ENCODE measurements at regions of chr14 and their contacts with region 1.

Region 1: DNA sequence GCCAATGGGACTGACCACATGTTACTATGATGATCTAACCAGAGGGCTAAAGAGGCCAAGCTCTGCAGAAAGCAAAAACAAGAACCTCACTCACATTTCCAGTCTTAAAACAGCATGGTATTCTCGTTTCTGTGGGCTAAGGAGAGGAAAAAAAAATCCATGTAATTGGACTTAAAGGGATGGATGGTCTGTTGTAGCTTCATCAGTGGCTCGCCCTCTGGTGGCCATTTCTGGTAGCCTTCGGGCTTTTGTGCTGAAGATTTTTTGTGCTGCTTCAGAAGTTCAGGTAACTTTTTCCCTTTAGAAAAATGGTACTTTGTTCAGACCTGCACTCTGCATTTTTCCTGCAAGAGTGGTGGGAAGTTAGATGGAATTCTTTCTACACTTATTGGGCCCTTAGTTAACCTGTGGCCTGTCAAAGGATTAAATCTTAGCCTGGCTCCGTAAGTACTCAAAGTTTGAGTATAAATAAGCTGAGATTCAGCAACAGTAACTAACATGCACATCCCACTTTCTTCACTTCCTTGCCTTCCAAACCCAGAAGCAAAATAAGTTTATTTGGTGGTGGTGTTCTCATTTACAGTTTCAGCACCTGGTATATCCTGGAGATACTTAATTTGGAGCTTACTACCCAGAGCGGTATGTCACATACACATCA is 22.3 kb downstream of the DCAF4 start:
- DNase-seq: peak; percentile 34
- H3K4me3 ChIP-seq: no peak overlapping the region
- H3K27ac ChIP-seq: no peak overlapping the region
- H3K27me3 ChIP-seq: no peaks in the 10 kb centered on the region
- CTCF ChIP-seq: peak; percentile 88

Region 2: GRCh38 chr14:72154723-72155633 is 793.6 kb before region 1 on chr14:
- CTCF ChIA-PET with region 1: no interaction called
- POLR2A ChIA-PET with region 1: no interaction called
- DNase-seq: no peak
- H3K4me3 ChIP-seq: no peak overlapping the region
- H3K27ac ChIP-seq: no peak overlapping the region
- H3K27me3 ChIP-seq: no peaks in the 10 kb centered on the region
- CTCF ChIP-seq: no peak

Region 3: GRCh38 chr14:72510566-72510965 is 438.0 kb before region 1 on chr14:
- CTCF ChIA-PET with region 1: interaction called, 479 read pairs
- POLR2A ChIA-PET with region 1: interaction called, 9 read pairs
- DNase-seq: no peak
- H3K4me3 ChIP-seq: no peak overlapping the region
- H3K27ac ChIP-seq: no peak overlapping the region
- H3K27me3 ChIP-seq: peaks cover 4% of the 10 kb centered on the region
- CTCF ChIP-seq: no peak

Region 4: GRCh38 chr14:72523424-72524294 is 425.0 kb before region 1 on chr14:
- CTCF ChIA-PET with region 1: interaction called, 11 read pairs
- POLR2A ChIA-PET with region 1: no interaction called
- DNase-seq: no peak
- H3K4me3 ChIP-seq: no peak overlapping the region
- H3K27ac ChIP-seq: no peak overlapping the region
- H3K27me3 ChIP-seq: no peaks in the 10 kb centered on the region
- CTCF ChIP-seq: no peak

Region 5: DNA sequence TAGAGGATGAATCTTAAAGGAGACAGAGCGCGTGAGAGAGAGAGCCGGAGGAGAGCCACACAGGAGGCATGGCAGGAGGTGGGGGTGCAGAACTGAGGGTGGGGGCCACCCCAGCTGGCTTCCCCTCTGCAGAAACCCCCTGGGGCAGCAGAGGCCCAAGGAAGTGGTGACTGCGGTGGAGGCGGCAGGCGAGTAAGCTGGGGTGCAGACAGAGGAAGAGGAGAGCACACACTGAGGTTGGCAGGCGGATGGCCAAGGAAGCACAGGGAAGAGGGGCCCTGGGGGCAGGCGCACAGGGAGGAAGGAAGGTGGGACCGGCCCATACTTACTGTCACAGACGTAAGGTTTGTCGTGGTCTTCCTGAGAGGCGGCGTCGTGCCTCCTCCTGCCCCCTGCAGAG is 234.5 kb before region 1 on chr14:
- CTCF ChIA-PET with region 1: no interaction called
- POLR2A ChIA-PET with region 1: no interaction called
- DNase-seq: no peak
- H3K4me3 ChIP-seq: no peak overlapping the region
- H3K27ac ChIP-seq: no peak overlapping the region
- H3K27me3 ChIP-seq: no peaks in the 10 kb centered on the region
- CTCF ChIP-seq: no peak

Region 6: DNA sequence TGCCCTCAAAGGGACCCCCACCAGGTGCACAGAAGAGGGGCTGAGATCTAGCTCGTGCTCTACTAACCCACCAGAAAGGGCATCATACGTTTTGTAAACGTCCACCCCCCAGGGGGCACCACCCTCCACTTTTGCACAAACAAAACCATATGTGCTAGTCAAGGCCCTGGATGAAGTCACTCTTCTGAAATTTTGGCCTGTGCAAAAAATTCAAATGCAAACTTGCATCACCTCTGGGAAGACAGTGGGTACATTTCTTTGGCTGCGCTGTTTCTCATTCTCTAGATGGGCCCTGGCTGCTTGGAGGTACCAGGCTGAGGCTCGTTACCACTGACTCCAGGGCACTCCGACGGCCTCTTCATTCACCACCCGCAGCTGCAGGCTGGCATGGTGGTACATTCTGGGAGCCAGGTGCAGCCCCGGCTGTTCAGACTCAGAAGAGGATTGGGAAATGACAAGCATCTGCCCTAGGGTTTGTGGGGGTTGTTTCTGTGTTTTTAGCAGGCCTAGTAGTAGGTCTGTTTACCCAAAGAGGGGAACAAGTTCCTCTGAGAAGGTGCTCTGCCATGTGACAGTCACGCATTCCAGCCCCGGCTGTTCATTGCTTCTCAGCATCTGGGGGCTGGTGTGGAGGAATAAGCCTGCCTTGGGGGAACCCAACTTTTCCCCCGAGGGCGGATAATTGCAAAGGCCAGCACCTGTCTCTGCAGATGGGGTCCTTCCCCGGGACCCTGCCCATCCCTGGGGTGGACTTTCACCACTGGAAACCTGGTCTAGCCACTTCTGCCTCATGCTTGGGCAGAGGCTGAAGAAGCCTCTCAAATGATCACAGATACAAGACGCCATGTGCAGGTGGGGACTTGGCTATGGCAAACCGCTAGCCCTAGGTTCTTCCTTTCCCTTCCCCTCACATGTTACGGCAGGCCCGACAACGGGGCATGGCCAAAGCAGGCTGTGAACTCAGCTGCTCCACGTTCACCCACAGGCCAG is 202.3 kb before region 1 on chr14:
- CTCF ChIA-PET with region 1: interaction called, 10 read pairs
- POLR2A ChIA-PET with region 1: no interaction called
- DNase-seq: peak; percentile 68
- H3K4me3 ChIP-seq: no peak overlapping the region
- H3K27ac ChIP-seq: peak overlapping the region; percentile 99
- H3K27me3 ChIP-seq: no peaks in the 10 kb centered on the region
- CTCF ChIP-seq: peak; percentile 51

Region 7: DNA sequence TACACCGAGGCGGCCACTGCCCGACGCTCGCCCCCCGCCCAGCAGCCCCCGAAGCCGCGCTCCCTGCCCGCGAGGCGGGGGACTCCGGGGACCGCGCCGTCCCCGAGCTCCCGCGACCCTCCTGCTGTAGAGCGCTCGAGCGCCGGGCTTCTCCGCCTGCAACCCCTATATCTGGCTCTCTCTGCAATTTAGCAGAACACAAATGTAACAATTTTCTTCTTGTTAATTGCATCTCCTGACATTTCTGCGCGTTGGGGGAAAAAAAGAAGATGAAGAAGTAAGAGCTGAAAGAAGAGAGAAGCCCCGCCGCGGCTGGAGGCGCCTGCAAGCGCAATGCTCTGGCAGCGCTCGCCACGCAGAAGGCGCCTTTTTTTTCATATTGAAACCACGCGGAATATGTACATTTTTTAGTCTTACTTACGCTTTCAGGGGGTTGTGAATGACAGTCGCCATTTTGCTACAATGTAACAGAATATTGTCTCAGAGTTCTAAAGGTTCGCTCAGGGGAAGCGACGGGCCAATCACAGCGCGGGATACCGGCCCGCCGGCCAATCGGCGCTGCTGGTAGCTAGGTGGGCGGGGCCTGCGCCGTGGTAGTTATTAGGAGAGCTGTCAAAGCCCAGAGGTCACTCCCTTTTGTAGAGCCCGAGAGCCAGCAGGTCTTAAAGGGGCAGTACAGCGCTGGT is 54.8 kb before region 1 on chr14 and contains the start of gene DPF3:
- CTCF ChIA-PET with region 1: interaction called, 11 read pairs
- POLR2A ChIA-PET with region 1: no interaction called
- DNase-seq: peak; percentile 91
- H3K4me3 ChIP-seq: peak within 1 kb of the TSS; percentile 83
- H3K27ac ChIP-seq: peak within 1 kb of the TSS; percentile 39
- H3K27me3 ChIP-seq: no peaks in the 10 kb centered on the region
- CTCF ChIP-seq: no peak
- polyA plus RNA-seq, gene DPF3: 15.8 and 18.1 TPM in 2 replicates

Region 8: GRCh38 chr14:72904840-72905561 is 43.6 kb before region 1 on chr14:
- CTCF ChIA-PET with region 1: interaction called, 39 read pairs
- POLR2A ChIA-PET with region 1: no interaction called
- DNase-seq: peak; percentile 49
- H3K4me3 ChIP-seq: no peak overlapping the region
- H3K27ac ChIP-seq: no peak overlapping the region
- H3K27me3 ChIP-seq: no peaks in the 10 kb centered on the region
- CTCF ChIP-seq: peak; percentile 96

Region 9: DNA sequence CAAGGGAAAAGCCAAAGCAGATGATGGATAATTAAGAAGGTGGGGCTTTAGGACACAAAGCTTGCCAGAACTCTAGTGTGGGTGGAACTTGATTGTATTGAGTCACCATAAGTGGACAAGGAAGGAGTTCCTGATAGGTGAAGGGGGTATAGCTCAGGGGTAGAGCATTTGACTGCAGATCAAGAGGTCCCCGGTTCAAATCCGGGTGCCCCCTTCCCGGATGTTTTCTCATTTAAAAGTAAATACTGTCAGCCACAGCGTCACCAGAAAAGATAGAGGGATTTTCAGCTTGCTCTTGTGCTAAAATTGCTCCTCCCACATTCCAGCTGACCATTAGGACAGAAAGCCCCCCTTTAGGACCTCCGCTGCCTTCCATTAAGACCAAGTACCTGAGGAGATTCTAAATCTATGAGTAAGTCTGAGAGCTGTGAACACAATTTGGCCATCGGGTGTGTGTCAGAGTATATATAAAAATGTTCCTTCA is 14.3 kb after region 1 on chr14:
- CTCF ChIA-PET with region 1: interaction called, 14 read pairs
- POLR2A ChIA-PET with region 1: no interaction called
- DNase-seq: peak; percentile 75
- H3K4me3 ChIP-seq: no peak overlapping the region
- H3K27ac ChIP-seq: no peak overlapping the region
- H3K27me3 ChIP-seq: no peaks in the 10 kb centered on the region
- CTCF ChIP-seq: no peak

Measured in AG04450 (cell line).